OCI-LY7 (cell line): ENCODE measurements at regions of chr2 and their contacts with region 1.

Region 1: DNA sequence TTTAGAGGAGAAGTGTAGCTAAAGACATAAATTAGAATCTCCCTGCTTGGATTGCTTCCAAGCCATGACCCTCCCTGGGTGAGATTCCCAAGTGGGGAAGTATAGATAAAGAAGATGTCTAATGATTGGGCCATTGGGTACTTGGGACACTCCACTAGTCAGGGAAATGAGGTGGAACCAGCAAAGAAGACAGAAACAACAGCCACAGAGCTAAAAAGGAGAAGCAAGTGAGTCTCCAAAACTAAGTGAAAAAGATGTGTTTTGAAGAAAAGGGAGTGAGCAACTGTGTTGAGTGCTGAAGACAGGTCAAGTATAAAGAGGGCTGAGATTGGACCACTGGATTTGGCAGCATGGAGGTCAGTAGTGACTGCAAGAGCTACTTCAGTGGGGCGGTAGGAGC is 276.7 kb upstream of the STON1 start:
- DNase-seq: no peak
- H3K4me3 ChIP-seq: no peak overlapping the region
- H3K27ac ChIP-seq: no peak overlapping the region
- H3K4me1 ChIP-seq: no peaks in the 10 kb centered on the region
- CTCF ChIP-seq: no peak

Region 2: GRCh38 chr2:47569658-47570472 is 683.4 kb before region 1 on chr2:
- CTCF ChIA-PET with region 1: no interaction called
- POLR2A ChIA-PET with region 1: interaction called, 10 read pairs
- intact Hi-C with region 1: no loop called
- DNase-seq: no peak
- H3K4me3 ChIP-seq: no peak overlapping the region
- H3K27ac ChIP-seq: no peak overlapping the region
- H3K4me1 ChIP-seq: no peaks in the 10 kb centered on the region
- CTCF ChIP-seq: no peak

Region 3: DNA sequence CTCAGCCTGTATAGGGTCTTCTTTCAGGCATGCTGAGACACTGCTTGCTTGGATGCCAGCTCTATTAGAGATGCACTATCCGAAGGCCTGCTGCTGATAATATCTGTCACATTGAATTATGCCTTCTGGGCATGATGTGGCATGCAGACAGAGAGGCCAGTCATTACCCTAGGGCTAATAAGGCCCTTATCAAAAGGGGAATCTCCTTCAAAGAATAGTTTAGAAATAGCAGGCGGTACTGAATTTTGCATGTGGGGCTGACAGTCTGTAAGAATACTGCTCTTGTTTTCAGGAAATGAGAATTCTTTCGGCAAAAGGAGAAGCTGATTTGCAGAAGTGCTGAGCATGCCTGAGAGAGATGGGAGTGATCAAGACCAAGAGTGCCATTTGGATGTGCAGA is 515.4 kb after region 1 on chr2:
- CTCF ChIA-PET with region 1: no interaction called
- POLR2A ChIA-PET with region 1: no interaction called
- intact Hi-C with region 1: no loop called
- DNase-seq: no peak
- H3K4me3 ChIP-seq: no peak overlapping the region
- H3K27ac ChIP-seq: no peak overlapping the region
- H3K4me1 ChIP-seq: no peaks in the 10 kb centered on the region
- CTCF ChIP-seq: no peak